Activated CD4-positive, alpha-beta T cell treated with anti-CD3 and anti-CD28 coated beads for 36 hours (primary cell): ENCODE measurements at regions of chr13 and their contacts with region 1.

Region 1: GRCh38 chr13:72194556-72194955 is 327.6 kb upstream of the DACH1 start:
- DNase-seq: no peak
- ATAC-seq: no peak
- H3K4me3 Mint-ChIP-seq: no peak overlapping the region
- H3K27ac Mint-ChIP-seq: no peak overlapping the region
- H3K4me1 Mint-ChIP-seq: no peaks in the 10 kb centered on the region
- H3K27me3 Mint-ChIP-seq: no peaks in the 10 kb centered on the region

Region 2: GRCh38 chr13:72255908-72256307 is 61.4 kb after region 1 on chr13:
- CTCF ChIA-PET with region 1: no interaction called
- POLR2A ChIA-PET with region 1: no interaction called
- intact Hi-C with region 1: loop called in 1 of 2 experiments (anchors 10 kb)
- DNase-seq: no peak
- ATAC-seq: no peak
- H3K4me3 Mint-ChIP-seq: no peak overlapping the region
- H3K27ac Mint-ChIP-seq: no peak overlapping the region
- H3K4me1 Mint-ChIP-seq: no peaks in the 10 kb centered on the region
- H3K27me3 Mint-ChIP-seq: no peaks in the 10 kb centered on the region